ENCODE measurements at regions of chr2 and their contacts with region 1.

Region 1: DNA sequence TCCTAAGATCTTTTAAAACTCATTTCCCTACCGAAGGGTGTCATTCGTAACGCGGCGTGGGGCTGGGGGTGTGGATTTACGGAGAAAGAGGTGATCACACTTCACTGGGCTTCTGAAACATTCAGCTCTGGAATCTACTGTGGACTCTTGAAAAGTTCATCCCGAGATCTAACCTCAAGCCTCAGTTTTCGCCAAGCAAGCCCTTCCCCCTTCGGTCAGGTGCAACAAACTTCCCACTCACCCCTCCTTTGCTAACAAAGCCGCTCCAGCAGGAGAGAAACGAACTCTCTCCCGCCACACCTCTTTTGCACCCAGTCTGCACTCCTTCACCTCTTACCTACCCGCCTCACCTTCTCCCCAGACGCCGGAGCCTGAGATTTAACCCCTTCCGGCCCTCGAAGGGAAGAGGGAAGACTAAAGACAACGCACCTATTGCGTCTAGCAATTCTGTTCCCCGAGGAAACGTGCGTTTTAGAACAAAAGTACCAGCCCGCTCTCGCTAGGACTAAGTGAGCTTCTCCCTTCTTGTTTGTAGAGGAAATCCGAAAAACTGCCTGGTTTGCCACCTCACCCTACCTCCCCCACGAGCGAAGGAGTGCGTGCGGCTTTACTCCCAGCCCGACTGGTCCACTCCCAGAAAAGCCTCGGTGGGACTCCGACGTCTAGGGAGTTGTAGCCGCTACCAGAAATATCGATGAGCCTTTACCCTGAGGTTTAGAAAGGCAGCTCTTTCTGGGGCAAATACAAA is 538 bp upstream of the PEX13 start:
- DNase-seq: peak; percentile 39 to 83 (median 58)
- ATAC-seq: peak; percentile 73
- H3K4me3 ChIP-seq: peak overlapping the region; percentile 64
- H3K4me3 Mint-ChIP-seq: peak overlapping the region; percentile 100
- H3K27ac ChIP-seq: peak overlapping the region; percentile 71 to 85
- H3K27ac Mint-ChIP-seq: peak overlapping the region; percentile 89
- H3K4me1 ChIP-seq: peaks cover 10% of the 10 kb centered on the region
- H3K4me1 Mint-ChIP-seq: peaks cover 46% of the 10 kb centered on the region
- H3K27me3 ChIP-seq: no peaks in the 10 kb centered on the region
- H3K27me3 Mint-ChIP-seq: no peaks in the 10 kb centered on the region
- CTCF ChIP-seq: no peak

Region 2: GRCh38 chr2:61144697-61145268 is 127.8 kb after region 1 on chr2:
- CTCF ChIA-PET with region 1: no interaction called
- POLR2A ChIA-PET with region 1: no interaction called
- intact Hi-C with region 1: loop called in 1 of 2 experiments (anchors 10 kb)
- DNase-seq: peak; percentile 80 to 97 (median 88)
- ATAC-seq: peak; percentile 89
- H3K4me3 ChIP-seq: peak overlapping the region; percentile 70
- H3K4me3 Mint-ChIP-seq: peak overlapping the region; percentile 89
- H3K27ac ChIP-seq: peak overlapping the region; percentile 21 to 69
- H3K27ac Mint-ChIP-seq: peak overlapping the region; percentile 86
- H3K4me1 ChIP-seq: peaks cover 12% of the 10 kb centered on the region
- H3K4me1 Mint-ChIP-seq: peaks cover 7% of the 10 kb centered on the region
- H3K27me3 ChIP-seq: no peaks in the 10 kb centered on the region
- H3K27me3 Mint-ChIP-seq: no peaks in the 10 kb centered on the region
- CTCF ChIP-seq: no peak

Measured in CD4-positive, alpha-beta T cell (primary cell).